CD4-positive, alpha-beta T cell (primary cell): ENCODE measurements at regions of chr6 and their contacts with region 1.

Region 1: DNA sequence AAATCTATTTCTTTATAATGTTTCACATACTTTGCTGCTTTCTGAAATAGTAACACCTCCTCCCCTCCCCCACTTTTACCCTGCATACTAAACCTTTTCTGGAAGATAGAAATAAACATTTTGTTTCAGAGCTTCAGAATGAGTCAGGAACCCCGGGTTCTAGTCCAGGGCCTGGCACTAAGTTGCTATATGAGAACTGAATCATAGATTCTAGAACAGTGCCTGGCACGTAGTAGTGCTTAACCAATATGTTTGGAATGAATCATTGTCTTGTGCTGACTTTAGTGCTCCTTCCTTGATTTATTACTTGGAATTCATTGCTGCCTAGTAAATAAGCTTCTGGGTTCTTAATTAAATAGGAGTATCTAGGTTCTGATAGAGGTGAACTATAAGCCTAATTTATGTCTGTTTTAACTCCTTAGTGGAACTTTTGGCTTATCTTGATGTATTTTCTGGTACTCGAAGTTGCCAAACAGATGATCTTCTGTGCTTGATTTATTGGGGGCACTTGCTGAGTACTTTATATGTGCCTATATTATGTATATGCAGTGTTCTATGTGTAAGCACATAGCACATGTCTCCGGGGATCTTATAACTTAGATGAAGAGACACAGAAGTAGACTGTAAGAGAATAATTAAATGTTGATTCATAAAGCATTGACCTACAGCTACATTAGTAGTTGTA is 18.6 kb downstream of the TAB2 start:
- DNase-seq: peak in 3 of 14 experiments; percentile 33 to 51 (median 39)
- ATAC-seq: no peak
- H3K4me3 ChIP-seq: no peak overlapping the region
- H3K4me3 Mint-ChIP-seq: peak overlapping the region; percentile 11
- H3K27ac ChIP-seq: no peak overlapping the region
- H3K27ac Mint-ChIP-seq: peak overlapping the region; percentile 0
- H3K4me1 ChIP-seq: peaks cover 24% of the 10 kb centered on the region
- H3K4me1 Mint-ChIP-seq: peaks cover 89% of the 10 kb centered on the region
- H3K27me3 ChIP-seq: no peaks in the 10 kb centered on the region
- H3K27me3 Mint-ChIP-seq: no peaks in the 10 kb centered on the region
- CTCF ChIP-seq: no peak

Region 2: DNA sequence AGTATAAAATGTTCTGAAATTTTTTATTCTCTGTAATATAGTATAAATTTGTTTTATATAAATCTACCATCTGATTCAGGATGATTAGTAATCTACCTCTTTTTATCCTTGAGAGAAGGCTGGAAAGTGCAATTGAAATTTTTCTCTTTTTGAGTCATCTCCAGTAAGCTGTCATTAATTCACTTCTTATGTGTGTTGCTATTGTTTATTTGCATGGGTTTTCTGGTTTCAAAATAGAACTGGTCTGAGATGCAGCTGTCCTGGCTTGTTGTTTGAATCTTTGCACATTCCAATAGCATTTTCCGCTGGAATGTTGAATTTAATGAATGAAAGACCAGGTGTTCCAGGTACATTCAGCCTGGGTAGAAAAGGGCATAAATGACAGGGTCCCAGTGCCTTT is 42.8 kb before region 1 on chr6:
- CTCF ChIA-PET with region 1: no interaction called
- POLR2A ChIA-PET with region 1: no interaction called
- intact Hi-C with region 1: no loop called
- DNase-seq: no peak
- ATAC-seq: no peak
- H3K4me3 ChIP-seq: no peak overlapping the region
- H3K4me3 Mint-ChIP-seq: no peak overlapping the region
- H3K27ac ChIP-seq: no peak overlapping the region
- H3K27ac Mint-ChIP-seq: no peak overlapping the region
- H3K4me1 ChIP-seq: no peaks in the 10 kb centered on the region
- H3K4me1 Mint-ChIP-seq: no peaks in the 10 kb centered on the region
- H3K27me3 ChIP-seq: no peaks in the 10 kb centered on the region
- H3K27me3 Mint-ChIP-seq: no peaks in the 10 kb centered on the region
- CTCF ChIP-seq: no peak

Region 3: GRCh38 chr6:149323925-149324324 is 12.1 kb before region 1 on chr6:
- CTCF ChIA-PET with region 1: interaction called, 9 read pairs
- POLR2A ChIA-PET with region 1: interaction called, 4 read pairs
- intact Hi-C with region 1: loop called in 1 of 2 experiments (anchors 2 kb)
- DNase-seq: no peak
- ATAC-seq: no peak
- H3K4me3 ChIP-seq: no peak overlapping the region
- H3K4me3 Mint-ChIP-seq: peak overlapping the region; percentile 3
- H3K27ac ChIP-seq: no peak overlapping the region
- H3K27ac Mint-ChIP-seq: peak overlapping the region; percentile 86
- H3K4me1 ChIP-seq: peaks cover 25% of the 10 kb centered on the region
- H3K4me1 Mint-ChIP-seq: peaks cover 87% of the 10 kb centered on the region
- H3K27me3 ChIP-seq: no peaks in the 10 kb centered on the region
- H3K27me3 Mint-ChIP-seq: no peaks in the 10 kb centered on the region
- CTCF ChIP-seq: no peak

Region 4: DNA sequence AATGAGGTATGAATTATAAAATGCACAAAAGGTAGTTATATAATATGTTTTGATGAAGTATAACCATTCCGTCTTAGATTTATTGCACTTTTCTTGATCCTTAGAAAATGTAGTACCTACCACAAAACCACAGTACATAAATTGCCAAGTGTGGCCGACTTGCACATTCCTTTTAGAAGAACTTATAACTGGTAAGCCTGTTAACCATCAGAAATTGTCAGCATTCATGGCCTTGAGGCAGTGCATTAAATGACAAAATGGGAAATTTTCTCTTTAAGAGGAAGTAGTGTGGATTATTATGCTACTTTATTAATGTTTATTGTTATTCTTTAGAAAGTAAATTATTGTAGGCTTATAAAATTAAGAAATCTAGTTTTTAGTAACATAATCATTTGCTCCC is 11.0 kb after region 1 on chr6:
- CTCF ChIA-PET with region 1: interaction called, 6 read pairs
- POLR2A ChIA-PET with region 1: interaction called, 3 read pairs
- intact Hi-C with region 1: loop called in 1 of 2 experiments (anchors 2 kb)
- DNase-seq: no peak
- ATAC-seq: no peak
- H3K4me3 ChIP-seq: no peak overlapping the region
- H3K4me3 Mint-ChIP-seq: no peak overlapping the region
- H3K27ac ChIP-seq: no peak overlapping the region
- H3K27ac Mint-ChIP-seq: peak overlapping the region; percentile 9
- H3K4me1 ChIP-seq: peaks cover 21% of the 10 kb centered on the region
- H3K4me1 Mint-ChIP-seq: peaks cover 85% of the 10 kb centered on the region
- H3K27me3 ChIP-seq: no peaks in the 10 kb centered on the region
- H3K27me3 Mint-ChIP-seq: no peaks in the 10 kb centered on the region
- CTCF ChIP-seq: no peak